Endothelial cell of umbilical vein (primary cell): ENCODE measurements at regions of chr14 and their contacts with region 1.

Region 1: GRCh38 chr14:68695326-68695768 is 97.5 kb downstream of the ZFP36L1 start:
- DNase-seq: peak; percentile 96
- H3K4me3 ChIP-seq: no peak overlapping the region
- H3K27ac ChIP-seq: peak overlapping the region; percentile 80
- H3K4me1 ChIP-seq: peaks cover 26% of the 10 kb centered on the region
- H3K27me3 ChIP-seq: no peaks in the 10 kb centered on the region
- CTCF ChIP-seq: no peak
- POLR2A ChIP-seq: peak; percentile 29

Region 2: DNA sequence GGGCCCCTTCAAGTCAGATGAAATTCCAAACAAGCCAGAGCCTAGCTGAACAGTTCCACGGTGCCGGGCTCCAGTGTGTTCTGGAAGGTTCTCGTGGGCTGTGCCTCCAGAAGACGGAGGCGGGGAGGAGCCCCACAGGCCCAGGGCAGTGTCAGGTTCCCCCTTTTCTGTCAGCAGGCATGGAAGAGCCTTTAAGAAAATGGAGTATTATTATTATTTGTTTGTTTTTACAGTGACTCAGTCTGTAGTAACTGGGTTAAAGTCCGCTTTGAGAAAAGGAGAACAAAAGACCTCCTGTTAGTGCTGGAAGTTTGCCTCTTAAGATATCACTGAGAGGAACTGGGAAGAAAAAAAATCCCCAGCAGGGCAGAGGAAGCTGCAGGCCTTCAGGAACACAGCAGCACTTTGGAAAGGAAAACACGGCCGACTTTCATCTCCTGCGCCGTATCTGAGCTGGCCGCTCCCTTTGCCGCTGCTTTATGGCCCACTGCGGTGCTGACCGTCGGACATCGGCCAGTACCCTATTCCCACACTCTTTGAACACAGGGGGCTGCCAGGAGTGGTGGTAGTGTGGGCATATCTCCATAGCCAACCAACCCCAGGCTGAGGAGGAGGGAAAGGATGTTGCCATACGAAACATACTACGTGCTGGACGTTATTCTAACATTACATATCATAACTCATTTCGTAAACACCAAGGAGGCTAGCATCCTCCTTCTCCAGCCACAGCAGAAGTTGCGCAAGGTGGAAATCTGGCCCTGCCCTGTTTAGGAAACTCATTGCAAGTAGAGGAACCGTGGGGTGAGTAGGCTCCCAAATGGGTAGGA is 96.5 kb before region 1 on chr14:
- CTCF ChIA-PET with region 1: no interaction called
- POLR2A ChIA-PET with region 1: no interaction called
- dilution Hi-C with region 1: no loop called
- intact Hi-C with region 1: loop called (anchors 1 kb)
- DNase-seq: peak; percentile 97
- H3K4me3 ChIP-seq: no peak overlapping the region
- H3K27ac ChIP-seq: peak overlapping the region; percentile 82
- H3K4me1 ChIP-seq: peaks cover 24% of the 10 kb centered on the region
- H3K27me3 ChIP-seq: no peaks in the 10 kb centered on the region
- CTCF ChIP-seq: no peak
- POLR2A ChIP-seq: peak; percentile 55

Region 3: DNA sequence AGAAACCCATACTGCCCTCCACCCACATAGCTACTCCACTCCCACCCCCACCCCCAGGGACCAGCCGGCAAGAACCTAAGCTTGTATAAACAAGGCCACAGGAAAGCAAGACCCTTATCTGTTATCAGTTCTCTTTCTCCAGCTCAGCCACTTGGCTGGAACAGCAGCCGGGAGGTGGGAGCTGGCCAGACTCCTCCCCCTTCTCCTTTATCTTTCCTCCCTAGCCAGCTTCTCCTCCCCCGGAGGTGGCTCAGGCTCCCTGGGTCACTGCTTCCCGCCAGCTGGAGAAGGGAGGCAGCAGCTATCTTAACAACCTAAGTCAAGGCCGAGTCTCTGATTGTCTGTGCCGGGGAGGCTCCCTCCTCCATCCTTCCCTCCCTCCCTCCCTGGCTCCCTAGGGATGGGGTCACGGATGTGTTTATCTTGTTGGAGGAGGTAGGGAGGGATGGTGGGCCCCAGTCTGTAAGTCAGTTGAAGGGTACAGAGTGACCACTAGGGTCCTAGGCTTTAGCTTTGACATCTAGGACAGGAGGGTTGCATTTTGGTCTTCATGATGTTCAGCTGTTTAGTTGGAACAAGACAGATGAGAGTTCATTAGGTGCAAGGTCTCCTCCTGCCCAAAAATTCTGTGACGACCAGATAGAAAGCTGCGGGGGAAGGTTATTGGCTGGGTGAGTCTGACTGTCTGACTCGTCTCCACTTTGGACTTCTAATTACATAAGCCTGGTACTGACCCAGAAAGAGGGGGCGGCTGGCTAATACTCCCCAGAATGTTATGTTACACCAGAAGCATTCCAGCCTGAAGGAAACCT is 67.8 kb after region 1 on chr14:
- CTCF ChIA-PET with region 1: interaction called, 3 read pairs
- POLR2A ChIA-PET with region 1: no interaction called
- dilution Hi-C with region 1: no loop called
- intact Hi-C with region 1: loop called (anchors 2 kb)
- DNase-seq: peak; percentile 92
- H3K4me3 ChIP-seq: no peak overlapping the region
- H3K27ac ChIP-seq: no peak overlapping the region
- H3K4me1 ChIP-seq: peaks cover 28% of the 10 kb centered on the region
- H3K27me3 ChIP-seq: no peaks in the 10 kb centered on the region
- CTCF ChIP-seq: no peak
- POLR2A ChIP-seq: peak; percentile 35